CD8-positive, alpha-beta memory T cell (primary cell): ENCODE measurements at regions of chr17 and their contacts with region 1.

Region 1: GRCh38 chr17:75864448-75864871 is 9.3 kb upstream of the WBP2 start:
- DNase-seq: peak; percentile 19 to 66 (median 47)
- H3K4me3 ChIP-seq: peak overlapping the region; percentile 5
- H3K4me3 Mint-ChIP-seq: peak overlapping the region; percentile 33 to 79 (median 69)
- H3K27ac ChIP-seq: peak overlapping the region; percentile 71
- H3K27ac Mint-ChIP-seq: peak overlapping the region; percentile 85 to 99 (median 92)
- H3K4me1 ChIP-seq: peaks cover 16% of the 10 kb centered on the region
- H3K4me1 Mint-ChIP-seq: peaks cover 22 to 30% (median 26%) of the 10 kb centered on the region in 3 donors
- H3K27me3 ChIP-seq: no peaks in the 10 kb centered on the region
- H3K27me3 Mint-ChIP-seq: peaks cover 0 to 2% of the 10 kb centered on the region in 2 donors

Region 2: GRCh38 chr17:75731716-75732498 is 132.6 kb before region 1 on chr17:
- CTCF ChIA-PET with region 1: no interaction called
- POLR2A ChIA-PET with region 1: no interaction called
- DNase-seq: no peak
- H3K4me3 ChIP-seq: no peak overlapping the region
- H3K4me3 Mint-ChIP-seq: no peak overlapping the region
- H3K27ac ChIP-seq: no peak overlapping the region
- H3K27ac Mint-ChIP-seq: peak overlapping the region in 1 of 8 donors; percentile 57
- H3K4me1 ChIP-seq: no peaks in the 10 kb centered on the region
- H3K4me1 Mint-ChIP-seq: peaks cover 4 to 8% (median 4%) of the 10 kb centered on the region in 3 donors
- H3K27me3 ChIP-seq: no peaks in the 10 kb centered on the region
- H3K27me3 Mint-ChIP-seq: no peaks in the 10 kb centered on the region

Region 3: GRCh38 chr17:75784473-75785015 is 79.9 kb before region 1 on chr17 and contains the start of gene UNK:
- CTCF ChIA-PET with region 1: interaction called, 14 read pairs
- POLR2A ChIA-PET with region 1: interaction called, 7 read pairs
- DNase-seq: peak; percentile 89 to 98 (median 97)
- H3K4me3 ChIP-seq: peak within 1 kb of the TSS; percentile 67
- H3K4me3 Mint-ChIP-seq: peak within 1 kb of the TSS; percentile 93 to 97 (median 93)
- H3K27ac ChIP-seq: peak within 1 kb of the TSS; percentile 98
- H3K27ac Mint-ChIP-seq: peak within 1 kb of the TSS; percentile 99 to 100 (median 100)
- H3K4me1 ChIP-seq: peaks cover 46% of the 10 kb centered on the region
- H3K4me1 Mint-ChIP-seq: peaks cover 39 to 70% (median 51%) of the 10 kb centered on the region in 3 donors
- H3K27me3 ChIP-seq: no peaks in the 10 kb centered on the region
- H3K27me3 Mint-ChIP-seq: peaks cover 0 to 6% of the 10 kb centered on the region in 2 donors
- total RNA-seq, gene UNK: 24.4 to 29.3 TPM

Region 4: GRCh38 chr17:75877752-75878173 is 13.3 kb after region 1 on chr17:
- CTCF ChIA-PET with region 1: interaction called, 29 read pairs
- POLR2A ChIA-PET with region 1: interaction called, 10 read pairs
- DNase-seq: peak; percentile 49 to 79 (median 67)
- H3K4me3 ChIP-seq: peak overlapping the region; percentile 61
- H3K4me3 Mint-ChIP-seq: peak overlapping the region; percentile 83 to 90 (median 86)
- H3K27ac ChIP-seq: peak overlapping the region; percentile 43
- H3K27ac Mint-ChIP-seq: peak overlapping the region; percentile 76 to 96 (median 87)
- H3K4me1 ChIP-seq: peaks cover 40% of the 10 kb centered on the region
- H3K4me1 Mint-ChIP-seq: peaks cover 35 to 59% (median 39%) of the 10 kb centered on the region in 3 donors
- H3K27me3 ChIP-seq: no peaks in the 10 kb centered on the region
- H3K27me3 Mint-ChIP-seq: peaks cover 0 to 5% of the 10 kb centered on the region in 2 donors

Region 5: GRCh38 chr17:75998327-75998795 is 133.9 kb after region 1 on chr17:
- CTCF ChIA-PET with region 1: no interaction called
- POLR2A ChIA-PET with region 1: no interaction called
- DNase-seq: no peak
- H3K4me3 ChIP-seq: no peak overlapping the region
- H3K4me3 Mint-ChIP-seq: no peak overlapping the region
- H3K27ac ChIP-seq: no peak overlapping the region
- H3K27ac Mint-ChIP-seq: peak overlapping the region in 2 of 8 donors; percentile 45 to 65
- H3K4me1 ChIP-seq: peaks cover 12% of the 10 kb centered on the region
- H3K4me1 Mint-ChIP-seq: peaks cover 11 to 14% (median 12%) of the 10 kb centered on the region in 3 donors
- H3K27me3 ChIP-seq: no peaks in the 10 kb centered on the region
- H3K27me3 Mint-ChIP-seq: no peaks in the 10 kb centered on the region

Region 6: DNA sequence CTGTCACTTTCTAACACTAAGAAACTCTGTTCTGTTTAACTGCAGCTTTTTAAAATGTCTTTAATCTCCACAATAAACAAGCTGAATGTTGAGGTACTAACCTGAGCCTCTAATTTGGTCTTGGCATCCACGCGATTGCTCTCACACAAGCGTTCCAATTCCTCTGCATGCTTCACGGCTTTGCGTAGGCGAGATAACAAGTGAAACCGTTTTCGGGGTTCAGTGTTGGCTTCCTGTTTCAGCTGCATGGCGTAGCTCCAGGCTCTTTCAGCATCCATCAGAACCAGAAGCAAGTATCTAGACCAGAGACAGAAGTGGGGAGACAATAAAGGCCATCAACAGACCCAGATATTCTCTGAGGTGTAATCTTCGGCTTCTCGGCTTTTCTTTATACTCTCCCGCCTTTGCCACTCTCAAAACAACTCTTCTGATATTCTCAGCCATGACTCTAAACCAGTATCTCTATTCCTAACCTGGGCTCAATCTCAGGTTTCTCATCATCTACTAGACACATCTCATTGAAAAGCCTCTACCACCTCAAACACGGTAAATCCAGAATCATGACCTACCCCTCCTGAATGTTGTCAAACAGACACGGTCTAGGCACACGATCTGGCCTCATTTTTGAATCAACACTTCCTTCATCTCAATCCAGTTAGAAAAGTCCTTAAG is 199.6 kb after region 1 on chr17:
- CTCF ChIA-PET with region 1: no interaction called
- POLR2A ChIA-PET with region 1: no interaction called
- DNase-seq: peak in 1 of 5 donors; percentile 31
- H3K4me3 ChIP-seq: no peak overlapping the region
- H3K4me3 Mint-ChIP-seq: peak overlapping the region; percentile 10 to 76 (median 64)
- H3K27ac ChIP-seq: no peak overlapping the region
- H3K27ac Mint-ChIP-seq: peak overlapping the region; percentile 73 to 97 (median 90)
- H3K4me1 ChIP-seq: no peaks in the 10 kb centered on the region
- H3K4me1 Mint-ChIP-seq: peaks cover 13 to 32% (median 24%) of the 10 kb centered on the region in 3 donors
- H3K27me3 ChIP-seq: no peaks in the 10 kb centered on the region
- H3K27me3 Mint-ChIP-seq: no peaks in the 10 kb centered on the region